IMR-90 (cell line): ENCODE measurements at regions of chr12 and their contacts with region 1.

Region 1: GRCh38 chr12:14239350-14239934 is 126.0 kb upstream of the ATF7IP start:
- DNase-seq: no peak
- ATAC-seq: peak; percentile 54
- H3K4me3 ChIP-seq: no peak overlapping the region
- H3K27ac ChIP-seq: no peak overlapping the region
- H3K4me1 ChIP-seq: peaks cover 4% of the 10 kb centered on the region; the same call in 1 of the 2 replicates
- H3K27me3 ChIP-seq: no peaks in the 10 kb centered on the region
- CTCF ChIP-seq: no peak
- POLR2A ChIP-seq: no peak
- RAD21 ChIP-seq: no peak

Region 2: DNA sequence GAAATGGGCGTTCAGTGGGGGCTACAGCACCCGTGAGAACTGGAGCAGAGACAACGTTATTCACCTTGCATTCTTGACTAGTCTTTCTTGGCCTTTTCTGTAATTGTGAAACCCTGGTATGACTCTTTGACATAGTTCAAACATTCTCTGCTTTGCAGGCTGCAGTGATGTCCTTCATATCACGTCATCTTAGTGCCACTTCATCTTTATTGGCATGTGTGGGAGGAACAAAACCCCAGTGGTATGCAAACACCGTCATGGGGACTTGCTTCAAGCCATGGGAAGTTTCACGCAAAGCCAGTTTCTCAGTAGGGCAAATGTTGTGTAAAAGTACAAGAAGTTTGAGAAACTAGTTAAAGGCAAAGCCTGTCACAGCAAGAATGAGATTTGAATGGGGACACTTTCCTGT is 1656.5 kb before region 1 on chr12:
- CTCF ChIA-PET with region 1: no interaction called
- POLR2A ChIA-PET with region 1: no interaction called
- dilution Hi-C with region 1: no loop called
- in situ Hi-C with region 1: no loop called
- intact Hi-C with region 1: no loop called
- DNase-seq: peak; percentile 67
- ATAC-seq: no peak
- H3K4me3 ChIP-seq: no peak overlapping the region
- H3K27ac ChIP-seq: no peak overlapping the region
- H3K4me1 ChIP-seq: no peaks in the 10 kb centered on the region
- H3K27me3 ChIP-seq: peaks cover 9% of the 10 kb centered on the region
- CTCF ChIP-seq: no peak
- POLR2A ChIP-seq: no peak
- RAD21 ChIP-seq: no peak

Region 3: DNA sequence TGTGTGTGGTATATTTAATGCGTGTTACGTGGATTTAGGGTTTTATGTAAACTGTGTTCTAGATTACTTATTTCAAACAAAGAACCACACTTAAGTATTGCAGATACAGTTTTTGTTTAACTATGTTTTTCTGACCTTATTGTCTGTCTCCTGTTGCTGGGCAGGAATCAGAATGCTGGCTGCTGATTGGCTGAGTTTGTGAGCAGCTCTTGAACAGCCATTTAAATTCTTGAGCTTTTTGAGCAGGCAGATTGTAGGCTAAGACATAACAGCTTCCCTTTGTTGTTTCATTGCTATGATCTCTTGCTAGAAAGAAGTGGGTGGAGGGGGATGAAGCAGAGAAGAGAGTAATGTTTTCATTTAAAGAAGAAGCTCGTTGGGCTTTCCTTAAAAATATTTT is 178.3 kb after region 1 on chr12:
- CTCF ChIA-PET with region 1: interaction called, 7 read pairs
- POLR2A ChIA-PET with region 1: no interaction called
- dilution Hi-C with region 1: no loop called
- in situ Hi-C with region 1: no loop called
- intact Hi-C with region 1: loop called (anchors 1 kb)
- DNase-seq: peak; percentile 92
- ATAC-seq: peak; percentile 86
- H3K4me3 ChIP-seq: no peak overlapping the region
- H3K27ac ChIP-seq: no peak overlapping the region
- H3K4me1 ChIP-seq: peaks cover 2% of the 10 kb centered on the region; the same call in 1 of the 2 replicates
- H3K27me3 ChIP-seq: no peaks in the 10 kb centered on the region
- CTCF ChIP-seq: no peak
- POLR2A ChIP-seq: no peak
- RAD21 ChIP-seq: no peak

Region 4: GRCh38 chr12:14618983-14619382 is 379.5 kb after region 1 on chr12:
- CTCF ChIA-PET with region 1: interaction called, 10 read pairs
- POLR2A ChIA-PET with region 1: no interaction called
- dilution Hi-C with region 1: no loop called
- in situ Hi-C with region 1: loop called (anchors 10 kb)
- intact Hi-C with region 1: loop called (anchors 1 kb)
- DNase-seq: peak; percentile 16
- ATAC-seq: peak; percentile 56; the same call in 1 of the 2 replicates
- H3K4me3 ChIP-seq: no peak overlapping the region
- H3K27ac ChIP-seq: no peak overlapping the region
- H3K4me1 ChIP-seq: no peaks in the 10 kb centered on the region
- H3K27me3 ChIP-seq: no peaks in the 10 kb centered on the region
- CTCF ChIP-seq: peak; percentile 42
- POLR2A ChIP-seq: no peak
- RAD21 ChIP-seq: peak; percentile 39; the same call in 1 of the 2 replicates

Region 5: GRCh38 chr12:14664510-14664909 is 425.1 kb after region 1 on chr12:
- CTCF ChIA-PET with region 1: interaction called, 6 read pairs
- POLR2A ChIA-PET with region 1: no interaction called
- dilution Hi-C with region 1: no loop called
- in situ Hi-C with region 1: no loop called
- intact Hi-C with region 1: loop called (anchors 1 kb)
- DNase-seq: peak; percentile 35
- ATAC-seq: peak; percentile 72; the same call in 1 of the 2 replicates
- H3K4me3 ChIP-seq: no peak overlapping the region
- H3K27ac ChIP-seq: no peak overlapping the region
- H3K4me1 ChIP-seq: no peaks in the 10 kb centered on the region
- H3K27me3 ChIP-seq: no peaks in the 10 kb centered on the region
- CTCF ChIP-seq: peak; percentile 67
- POLR2A ChIP-seq: no peak
- RAD21 ChIP-seq: peak; percentile 70

Region 6: GRCh38 chr12:14716848-14717444 is 477.5 kb after region 1 on chr12:
- CTCF ChIA-PET with region 1: no interaction called
- POLR2A ChIA-PET with region 1: no interaction called
- dilution Hi-C with region 1: no loop called
- in situ Hi-C with region 1: no loop called
- intact Hi-C with region 1: loop called (anchors 2 kb)
- DNase-seq: peak; percentile 37
- ATAC-seq: peak; percentile 77
- H3K4me3 ChIP-seq: no peak overlapping the region
- H3K27ac ChIP-seq: no peak overlapping the region
- H3K4me1 ChIP-seq: no peaks in the 10 kb centered on the region
- H3K27me3 ChIP-seq: peaks cover 2% of the 10 kb centered on the region; the same call in 1 of the 2 replicates
- CTCF ChIP-seq: peak; percentile 51
- POLR2A ChIP-seq: no peak
- RAD21 ChIP-seq: peak; percentile 42